Calu3 (cell line): ENCODE measurements at regions of chr2 and their contacts with region 1.

Region 1: GRCh38 chr2:24359129-24360049 is 947 bp downstream of the ITSN2 start:
- DNase-seq: peak; percentile 40
- H3K4me3 Mint-ChIP-seq: peak overlapping the region; percentile 67
- H3K27ac Mint-ChIP-seq: peak overlapping the region; percentile 25
- H3K4me1 Mint-ChIP-seq: peaks cover 21% of the 10 kb centered on the region
- H3K27me3 Mint-ChIP-seq: no peaks in the 10 kb centered on the region
- CTCF ChIP-seq: no peak

Region 2: DNA sequence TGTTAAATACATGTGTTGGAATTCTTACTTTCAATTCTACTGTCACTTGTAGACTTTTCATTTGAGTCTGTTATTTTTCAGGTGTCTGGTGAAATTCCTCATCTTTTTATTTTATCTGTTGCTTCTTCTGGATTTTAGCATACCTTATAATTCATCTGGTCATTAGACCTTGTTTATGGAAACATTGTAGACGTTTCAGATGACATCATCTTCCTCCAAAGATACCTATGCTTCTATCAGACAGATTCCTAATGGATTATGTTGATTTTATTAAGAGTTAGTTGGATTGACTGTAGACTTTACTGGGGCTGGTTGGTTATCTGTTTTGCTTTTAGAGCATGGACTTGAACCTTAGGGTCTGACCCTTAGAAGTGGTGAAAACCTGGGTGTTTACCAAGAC is 364.8 kb before region 1 on chr2:
- CTCF ChIA-PET with region 1: no interaction called
- intact Hi-C with region 1: no loop called
- DNase-seq: no peak
- H3K4me3 Mint-ChIP-seq: no peak overlapping the region
- H3K27ac Mint-ChIP-seq: no peak overlapping the region
- H3K4me1 Mint-ChIP-seq: no peaks in the 10 kb centered on the region
- H3K27me3 Mint-ChIP-seq: no peaks in the 10 kb centered on the region
- CTCF ChIP-seq: no peak

Region 3: DNA sequence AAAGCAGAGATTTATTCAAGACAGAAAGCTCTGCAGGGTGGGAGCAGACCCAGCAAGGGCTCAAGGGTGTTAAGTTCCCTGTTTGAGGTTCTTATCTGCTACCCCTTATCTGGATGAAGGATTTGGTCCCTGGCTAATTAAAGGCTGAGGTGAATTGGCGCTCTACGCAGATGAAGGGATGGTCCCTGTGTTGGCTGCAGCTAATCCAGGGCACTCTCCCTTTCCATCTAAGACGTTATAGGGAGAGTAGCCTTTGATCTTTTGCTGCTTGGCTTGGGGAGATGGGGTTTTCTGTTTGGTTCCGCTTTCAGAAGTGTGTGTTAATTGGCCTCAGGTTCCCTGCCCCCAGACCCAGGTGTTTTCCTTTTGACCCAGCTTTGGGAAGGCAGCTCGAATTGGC is 167.5 kb before region 1 on chr2:
- CTCF ChIA-PET with region 1: no interaction called
- intact Hi-C with region 1: no loop called
- DNase-seq: no peak
- H3K4me3 Mint-ChIP-seq: no peak overlapping the region
- H3K27ac Mint-ChIP-seq: no peak overlapping the region
- H3K4me1 Mint-ChIP-seq: no peaks in the 10 kb centered on the region
- H3K27me3 Mint-ChIP-seq: peaks cover 19% of the 10 kb centered on the region
- CTCF ChIP-seq: no peak

Region 4: GRCh38 chr2:24345937-24346336 is 13.5 kb before region 1 on chr2:
- CTCF ChIA-PET with region 1: interaction called, 7 read pairs
- intact Hi-C with region 1: loop called (anchors 2 kb)
- DNase-seq: no peak
- H3K4me3 Mint-ChIP-seq: no peak overlapping the region
- H3K27ac Mint-ChIP-seq: no peak overlapping the region
- H3K4me1 Mint-ChIP-seq: peaks cover 28% of the 10 kb centered on the region
- H3K27me3 Mint-ChIP-seq: no peaks in the 10 kb centered on the region
- CTCF ChIP-seq: no peak

Region 5: GRCh38 chr2:24404491-24404921 is 45.1 kb after region 1 on chr2:
- CTCF ChIA-PET with region 1: no interaction called
- intact Hi-C with region 1: no loop called
- DNase-seq: peak; percentile 9
- H3K4me3 Mint-ChIP-seq: no peak overlapping the region
- H3K27ac Mint-ChIP-seq: no peak overlapping the region
- H3K4me1 Mint-ChIP-seq: peaks cover 8% of the 10 kb centered on the region
- H3K27me3 Mint-ChIP-seq: peaks cover 10% of the 10 kb centered on the region
- CTCF ChIP-seq: no peak